ENCODE measurements at regions of chr6 and their contacts with region 1.

Region 1: GRCh38 chr6:100116411-100117194 is 122.6 kb upstream of the MCHR2 start:
- DNase-seq: peak; percentile 38 to 56
- H3K4me3 ChIP-seq: no peak overlapping the region
- H3K27ac ChIP-seq: no peak overlapping the region
- H3K4me1 ChIP-seq: no peaks in the 10 kb centered on the region
- H3K27me3 ChIP-seq: peaks cover 0 to 1% (median 0%) of the 10 kb centered on the region in 4 experiments; a peak in 1 of 7 replicates
- CTCF ChIP-seq: peak in 2 of 3 experiments; percentile 70 to 95; a peak in 3 of 4 replicates
- EP300 ChIP-seq: no peak
- POLR2A ChIP-seq: no peak
- RAD21 ChIP-seq: peak; percentile 94

Region 2: DNA sequence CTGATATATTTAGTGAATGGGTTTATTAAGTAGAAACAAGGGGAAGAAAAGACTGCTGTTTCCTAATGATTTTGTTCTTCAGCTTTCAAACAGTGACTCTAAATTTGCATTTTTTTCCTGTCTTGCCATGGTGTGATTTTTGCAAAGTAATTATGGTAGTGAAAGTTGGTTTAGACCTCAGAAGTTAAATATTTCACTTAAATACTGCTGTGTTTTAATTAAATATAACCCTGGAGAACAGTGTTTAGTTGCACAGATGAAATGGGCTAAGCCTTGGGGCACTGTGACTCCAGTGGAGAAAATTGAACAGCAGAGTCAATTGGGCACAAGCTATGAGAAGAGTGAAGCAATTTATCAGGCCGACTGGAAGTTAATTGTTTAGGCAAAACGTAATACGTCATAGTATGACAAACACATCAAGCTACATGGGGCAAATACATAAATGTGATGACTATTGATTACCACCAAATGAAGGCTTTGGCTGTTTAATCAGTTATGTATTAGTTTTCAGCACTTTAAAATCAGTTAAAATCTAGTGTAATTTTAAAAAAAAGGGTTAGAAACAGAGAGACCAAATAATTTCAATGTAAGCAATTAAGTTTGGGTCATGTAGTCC is 11.4 kb before region 1 on chr6:
- CTCF ChIA-PET with region 1: interaction called, 24 read pairs
- POLR2A ChIA-PET with region 1: no interaction called
- DNase-seq: no peak
- H3K4me3 ChIP-seq: no peak overlapping the region
- H3K27ac ChIP-seq: no peak overlapping the region
- H3K4me1 ChIP-seq: no peaks in the 10 kb centered on the region
- H3K27me3 ChIP-seq: no peaks in the 10 kb centered on the region
- CTCF ChIP-seq: no peak
- EP300 ChIP-seq: no peak
- POLR2A ChIP-seq: no peak
- RAD21 ChIP-seq: no peak

Region 3: GRCh38 chr6:100464903-100465700 is 348.5 kb after region 1 on chr6 and contains the start of gene SIM1:
- CTCF ChIA-PET with region 1: interaction called, 23 read pairs
- POLR2A ChIA-PET with region 1: no interaction called
- DNase-seq: peak; percentile 75 to 92
- H3K4me3 ChIP-seq: peak within 1 kb of the TSS; percentile 25 to 56 (median 28); a peak in 7 of 8 replicates
- H3K27ac ChIP-seq: no peak within 1 kb of the TSS
- H3K4me1 ChIP-seq: peaks cover 13 to 36% (median 15%) of the 10 kb centered on the region in 4 experiments
- H3K27me3 ChIP-seq: peaks cover 86 to 100% (median 93%) of the 10 kb centered on the region in 4 experiments
- CTCF ChIP-seq: no peak
- EP300 ChIP-seq: no peak
- POLR2A ChIP-seq: no peak
- RAD21 ChIP-seq: no peak
- total RNA-seq, gene SIM1: 0.39 and 0.61 TPM in 2 replicates

Region 4: GRCh38 chr6:100479179-100480035 is 362.8 kb after region 1 on chr6:
- CTCF ChIA-PET with region 1: interaction called, 29 read pairs
- POLR2A ChIA-PET with region 1: no interaction called
- DNase-seq: no peak
- H3K4me3 ChIP-seq: no peak overlapping the region
- H3K27ac ChIP-seq: no peak overlapping the region
- H3K4me1 ChIP-seq: no peaks in the 10 kb centered on the region
- H3K27me3 ChIP-seq: no peaks in the 10 kb centered on the region
- CTCF ChIP-seq: peak in 2 of 3 experiments; percentile 57 to 70; a peak in 3 of 4 replicates
- EP300 ChIP-seq: no peak
- POLR2A ChIP-seq: no peak
- RAD21 ChIP-seq: peak; percentile 90 to 92

Measured in H1 (cell line).